HEK293 (cell line): ENCODE measurements at regions of chr6 and their contacts with region 1.

Region 1: GRCh38 chr6:10510592-10511367 is 10.4 kb upstream of the GCNT2 start:
- H3K4me3 ChIP-seq: no peak overlapping the region
- H3K27ac ChIP-seq: no peak overlapping the region
- H3K4me1 ChIP-seq: peaks cover 6% of the 10 kb centered on the region; the same call in 1 of the 2 replicates
- CTCF ChIP-seq: peak; percentile 88

Region 2: DNA sequence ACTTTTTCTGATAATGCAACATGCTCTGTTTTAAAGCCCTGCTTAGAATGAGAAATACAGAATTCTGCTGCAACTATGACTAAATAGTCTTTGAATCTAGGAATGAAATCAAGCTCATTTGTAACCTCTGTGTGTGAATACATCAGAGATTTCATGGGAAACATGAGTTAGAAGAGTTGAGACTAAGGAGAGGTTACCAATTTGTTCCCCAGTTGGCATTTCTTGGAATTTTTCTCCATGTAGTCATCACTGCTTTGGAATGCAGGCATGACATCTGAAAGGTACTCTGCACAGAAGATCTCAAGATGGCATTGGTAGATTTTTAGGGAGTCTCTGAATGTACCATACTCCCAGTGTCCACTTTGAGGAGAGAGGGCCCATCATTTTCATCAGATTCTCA is 333.1 kb before region 1 on chr6:
- CTCF ChIA-PET with region 1: no interaction called
- POLR2A ChIA-PET with region 1: no interaction called
- H3K4me3 ChIP-seq: no peak overlapping the region
- H3K27ac ChIP-seq: no peak overlapping the region
- H3K4me1 ChIP-seq: no peaks in the 10 kb centered on the region
- CTCF ChIP-seq: no peak

Region 3: GRCh38 chr6:10300071-10300470 is 210.7 kb before region 1 on chr6:
- CTCF ChIA-PET with region 1: no interaction called
- POLR2A ChIA-PET with region 1: no interaction called
- H3K4me3 ChIP-seq: no peak overlapping the region
- H3K27ac ChIP-seq: no peak overlapping the region
- H3K4me1 ChIP-seq: no peaks in the 10 kb centered on the region
- CTCF ChIP-seq: no peak

Region 4: DNA sequence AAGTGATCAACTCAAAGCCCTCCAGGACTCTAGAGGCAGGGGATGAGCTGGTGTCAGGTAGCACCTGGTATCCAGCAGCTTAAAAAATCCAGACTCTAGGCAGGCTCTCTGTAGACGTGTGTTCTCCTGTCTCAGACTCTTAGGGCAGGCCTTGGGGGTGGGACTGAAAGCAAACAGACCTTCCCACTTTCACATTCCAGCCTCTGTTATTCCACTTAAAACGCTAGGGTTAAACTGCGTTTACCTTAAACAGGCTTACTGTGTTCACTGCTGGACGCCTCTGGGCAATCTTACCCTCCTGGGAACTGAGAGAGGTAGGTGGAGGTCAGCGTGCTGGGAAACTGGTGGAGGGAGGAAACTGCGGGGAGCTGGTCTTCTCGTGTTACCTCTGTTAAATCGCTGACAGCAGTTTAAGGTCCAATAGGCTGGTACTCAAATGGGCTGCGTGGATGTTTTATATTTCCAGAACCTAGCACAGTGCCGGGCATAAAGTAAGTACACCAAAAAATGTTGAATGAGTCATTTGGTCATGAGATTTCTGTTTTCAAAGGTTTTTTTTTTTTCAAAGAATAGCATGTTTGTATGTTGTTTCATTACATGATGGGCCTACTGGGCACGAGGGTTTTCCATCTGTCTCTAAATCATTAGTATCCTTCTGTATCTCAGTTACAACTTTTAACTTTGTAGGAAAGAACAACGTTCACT is 10.5 kb after region 1 on chr6 and contains the start of gene GCNT2:
- CTCF ChIA-PET with region 1: interaction called, 12 read pairs
- POLR2A ChIA-PET with region 1: interaction called, 12 read pairs
- H3K4me3 ChIP-seq: peak within 1 kb of the TSS; percentile 22
- H3K27ac ChIP-seq: peak within 1 kb of the TSS; percentile 58
- H3K4me1 ChIP-seq: peaks cover 11% of the 10 kb centered on the region
- CTCF ChIP-seq: no peak

Region 5: DNA sequence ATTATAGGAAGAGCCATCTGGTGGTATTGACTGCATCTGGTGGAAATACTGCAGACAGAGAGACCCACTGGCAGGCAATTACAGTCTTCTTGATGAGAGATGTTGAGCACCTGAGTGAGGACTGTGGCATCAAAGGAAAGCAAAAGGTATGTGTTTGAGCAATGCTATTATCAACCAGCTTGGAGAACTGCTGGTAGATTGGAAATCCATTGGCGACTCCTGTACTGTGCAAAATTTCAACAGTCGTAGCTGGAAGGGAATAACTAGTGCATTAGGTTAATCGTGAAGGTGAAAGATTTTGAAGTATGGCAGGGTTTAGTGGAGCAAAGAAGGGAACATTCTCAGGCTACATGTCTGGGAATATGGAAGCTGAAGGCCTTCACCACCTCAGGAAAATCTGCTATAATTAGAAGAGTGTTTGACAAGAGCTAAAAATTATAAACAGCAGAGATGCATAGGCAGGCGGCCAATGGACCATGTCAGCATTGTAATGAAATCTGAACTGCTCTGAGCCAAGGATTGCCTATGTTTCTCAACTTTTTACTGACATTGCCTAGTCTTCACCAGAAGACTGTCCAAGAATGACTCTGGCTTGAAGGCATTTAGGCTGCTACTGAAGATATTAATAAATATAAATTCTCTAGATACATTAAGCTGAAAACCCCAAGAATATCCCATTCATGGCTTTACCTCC is 99.4 kb after region 1 on chr6:
- CTCF ChIA-PET with region 1: interaction called, 11 read pairs
- POLR2A ChIA-PET with region 1: no interaction called
- H3K4me3 ChIP-seq: no peak overlapping the region
- H3K27ac ChIP-seq: no peak overlapping the region
- H3K4me1 ChIP-seq: peaks cover 17% of the 10 kb centered on the region
- CTCF ChIP-seq: no peak

Region 6: GRCh38 chr6:10800829-10801535 is 290.2 kb after region 1 on chr6:
- CTCF ChIA-PET with region 1: interaction called, 54 read pairs
- POLR2A ChIA-PET with region 1: no interaction called
- H3K4me3 ChIP-seq: no peak overlapping the region
- H3K27ac ChIP-seq: no peak overlapping the region
- H3K4me1 ChIP-seq: no peaks in the 10 kb centered on the region
- CTCF ChIP-seq: peak; percentile 32; the same call in 1 of the 2 replicates